ENCODE measurements at regions of chr17 and their contacts with region 1.

Region 1: DNA sequence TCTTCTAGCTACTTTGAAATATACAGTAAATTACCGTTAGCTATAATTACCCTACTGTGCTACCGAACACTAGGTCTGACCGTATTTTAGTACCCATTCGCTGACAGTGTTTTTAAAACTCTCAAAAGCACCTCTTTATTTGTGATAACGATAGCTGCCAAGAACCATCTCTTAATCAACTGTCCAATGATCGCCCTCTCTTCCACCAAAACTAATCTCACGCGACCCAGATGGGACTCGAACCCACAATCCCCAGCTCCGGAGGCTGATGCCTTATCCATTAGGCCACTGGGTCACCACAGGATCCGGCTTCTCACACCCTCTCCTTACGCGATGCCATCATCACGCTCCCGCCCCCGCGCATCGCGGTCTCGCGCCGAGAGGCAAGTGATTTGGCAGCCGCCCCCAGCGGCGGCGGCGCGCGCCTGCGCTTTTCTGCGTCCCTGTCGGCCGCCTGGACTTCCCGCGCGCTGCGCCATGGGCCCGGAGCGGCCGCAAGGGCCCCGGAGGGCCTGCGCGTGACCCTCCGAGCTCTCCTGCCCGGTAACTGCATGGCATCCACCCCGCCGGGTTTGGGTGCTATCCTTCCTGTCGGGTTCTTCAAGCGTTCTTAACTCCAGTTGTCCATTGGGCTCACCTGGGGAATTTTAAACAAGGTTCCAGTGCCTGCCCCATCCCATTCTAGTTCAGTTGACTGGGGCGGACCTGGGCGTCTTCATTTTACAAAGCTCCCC is 15.7 kb upstream of the KPNA2 start:
- DNase-seq: peak; percentile 97
- H3K4me3 ChIP-seq: peak overlapping the region; percentile 55
- H3K27ac ChIP-seq: peak overlapping the region; percentile 76
- H3K4me1 ChIP-seq: peaks cover 12% of the 10 kb centered on the region
- H3K27me3 ChIP-seq: no peaks in the 10 kb centered on the region
- CTCF ChIP-seq: peak; percentile 32

Region 2: DNA sequence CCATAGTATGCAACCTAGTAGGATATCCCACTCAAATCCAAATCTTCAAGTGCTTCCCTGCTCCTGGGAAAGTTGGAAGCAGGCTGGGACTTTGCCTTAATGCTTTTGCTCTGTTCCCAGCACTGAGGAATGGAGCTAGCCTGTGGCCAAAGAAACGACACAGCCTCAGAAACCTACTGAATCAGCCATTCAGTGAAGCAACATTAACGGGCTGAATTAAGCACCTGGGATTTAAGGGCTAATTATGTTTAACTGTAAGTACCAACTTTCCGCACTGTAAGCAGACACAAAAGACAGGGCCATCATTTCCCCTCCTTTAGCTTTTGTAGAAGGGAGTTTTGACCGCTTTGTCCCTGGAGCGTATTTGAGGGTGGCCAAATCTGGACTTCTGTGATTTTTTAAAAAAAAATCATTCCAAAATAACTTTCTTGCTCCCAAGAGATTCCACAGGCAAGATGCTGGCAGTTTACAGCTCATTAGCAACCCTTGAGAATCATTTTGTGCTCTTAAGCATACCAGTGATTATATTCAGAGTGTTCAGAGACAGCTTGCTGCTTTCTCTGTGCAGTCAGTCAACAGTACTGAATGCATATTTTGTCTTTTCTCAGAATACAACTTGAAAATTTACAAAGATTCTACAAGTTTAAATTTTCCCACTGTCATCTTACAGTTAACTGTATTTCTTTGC is 319.7 kb before region 1 on chr17:
- CTCF ChIA-PET with region 1: no interaction called
- POLR2A ChIA-PET with region 1: no interaction called
- intact Hi-C with region 1: no loop called
- DNase-seq: no peak
- H3K4me3 ChIP-seq: no peak overlapping the region
- H3K27ac ChIP-seq: no peak overlapping the region
- H3K4me1 ChIP-seq: peaks cover 5% of the 10 kb centered on the region
- H3K27me3 ChIP-seq: no peaks in the 10 kb centered on the region
- CTCF ChIP-seq: no peak

Region 3: GRCh38 chr17:67800495-67800928 is 219.3 kb before region 1 on chr17:
- CTCF ChIA-PET with region 1: no interaction called
- POLR2A ChIA-PET with region 1: no interaction called
- intact Hi-C with region 1: loop called (anchors 10 kb)
- DNase-seq: peak; percentile 71
- H3K4me3 ChIP-seq: no peak overlapping the region
- H3K27ac ChIP-seq: no peak overlapping the region
- H3K4me1 ChIP-seq: no peaks in the 10 kb centered on the region
- H3K27me3 ChIP-seq: no peaks in the 10 kb centered on the region
- CTCF ChIP-seq: peak; percentile 72

Region 4: DNA sequence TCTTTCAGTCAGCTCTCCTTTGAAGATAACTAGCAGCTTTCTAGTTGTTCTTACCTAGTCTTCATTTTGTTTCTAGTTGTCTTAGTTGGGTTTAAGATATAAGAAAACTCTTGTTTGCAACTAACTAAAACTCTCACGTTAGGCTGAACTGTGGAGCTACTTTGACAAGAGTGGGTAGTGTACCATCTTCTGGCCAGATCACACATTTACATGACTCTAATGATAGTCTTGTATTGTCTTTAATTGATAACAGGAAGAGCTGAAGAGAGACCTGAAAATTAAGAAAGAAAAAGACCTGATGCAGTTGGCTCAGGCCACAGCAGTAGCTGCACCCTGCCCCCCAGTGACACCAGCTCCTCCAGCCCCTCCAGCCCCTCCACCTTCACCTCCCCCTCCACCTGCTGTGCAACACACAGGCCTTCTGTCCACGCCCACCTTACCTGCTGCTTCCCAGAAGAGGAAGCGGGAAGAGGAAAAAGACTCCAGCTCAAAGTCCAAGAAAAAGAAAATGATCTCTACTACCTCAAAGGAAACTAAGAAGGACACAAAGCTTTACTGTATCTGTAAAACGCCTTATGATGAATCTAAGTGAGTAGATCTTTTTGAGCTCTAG is 60.4 kb before region 1 on chr17:
- CTCF ChIA-PET with region 1: no interaction called
- POLR2A ChIA-PET with region 1: no interaction called
- intact Hi-C with region 1: no loop called
- DNase-seq: no peak
- H3K4me3 ChIP-seq: no peak overlapping the region
- H3K27ac ChIP-seq: no peak overlapping the region
- H3K4me1 ChIP-seq: no peaks in the 10 kb centered on the region
- H3K27me3 ChIP-seq: no peaks in the 10 kb centered on the region
- CTCF ChIP-seq: no peak

Region 5: DNA sequence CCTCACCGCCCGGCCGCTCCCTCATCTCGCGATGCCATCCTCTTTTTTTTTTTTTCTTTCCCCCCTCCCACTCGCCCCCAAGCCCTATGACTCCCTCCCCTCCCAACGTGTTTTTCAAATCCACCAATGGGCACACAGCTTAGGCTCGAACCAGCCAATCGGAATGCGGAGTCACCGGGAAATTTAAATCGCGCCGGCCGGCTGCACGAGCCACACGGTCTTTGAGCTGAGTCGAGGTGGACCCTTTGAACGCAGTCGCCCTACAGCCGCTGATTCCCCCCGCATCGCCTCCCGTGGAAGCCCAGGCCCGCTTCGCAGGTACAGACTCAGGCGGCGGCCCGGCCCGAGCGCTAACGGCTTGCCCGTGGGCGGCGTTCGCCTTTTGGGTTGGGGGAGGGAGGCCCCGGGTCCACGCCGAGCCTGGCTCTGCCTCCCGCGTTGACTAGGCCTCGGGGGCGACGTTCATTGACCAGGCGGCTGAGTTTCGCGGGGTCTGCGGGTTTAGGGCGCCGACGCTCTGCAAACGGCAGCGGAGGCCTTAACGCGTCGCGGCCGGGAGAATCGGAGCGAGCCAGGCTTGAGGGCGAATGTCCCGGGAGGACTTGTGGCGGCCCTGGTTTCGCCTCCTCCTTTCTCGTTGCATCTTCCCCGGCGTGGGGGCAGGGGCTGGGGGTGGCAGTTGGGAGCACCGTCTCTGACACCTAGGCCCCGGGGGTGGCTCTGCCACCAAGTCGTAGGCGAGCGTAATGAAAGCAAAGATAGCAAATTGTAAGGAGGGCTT is 15.9 kb after region 1 on chr17 and contains the start of gene KPNA2:
- CTCF ChIA-PET with region 1: interaction called, 3 read pairs
- POLR2A ChIA-PET with region 1: interaction called, 9 read pairs
- intact Hi-C with region 1: loop called (anchors 1 kb)
- DNase-seq: peak; percentile 98
- H3K4me3 ChIP-seq: peak within 1 kb of the TSS; percentile 95
- H3K27ac ChIP-seq: peak within 1 kb of the TSS; percentile 98
- H3K4me1 ChIP-seq: peaks cover 26% of the 10 kb centered on the region
- H3K27me3 ChIP-seq: no peaks in the 10 kb centered on the region
- CTCF ChIP-seq: no peak
- total RNA-seq, gene KPNA2: 481 and 486 TPM in 2 replicates